B cell (primary cell): ENCODE measurements at regions of chr4 and their contacts with region 1.

Region 1: DNA sequence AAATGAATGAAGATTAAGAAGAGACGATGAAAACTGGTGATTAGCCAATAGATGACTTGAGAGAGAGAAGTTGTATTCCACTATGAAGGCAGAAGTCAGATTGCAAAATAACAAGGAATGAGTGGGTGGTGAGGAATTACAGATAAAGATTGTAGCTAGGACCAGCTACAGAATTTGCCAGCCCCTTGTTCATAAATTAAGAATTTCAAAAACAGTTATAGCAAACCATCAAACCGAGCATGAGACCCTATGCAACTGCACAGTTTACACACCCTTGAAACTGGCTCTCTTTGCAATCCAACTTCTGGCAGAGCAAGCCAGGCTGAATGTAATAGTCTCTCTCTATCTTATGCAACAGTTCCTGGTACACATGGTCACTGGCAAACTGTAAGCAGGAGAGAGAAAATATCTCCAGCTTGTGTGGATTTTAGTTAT is 35.2 kb downstream of the STAP1 start:
- DNase-seq: no peak
- ATAC-seq: no peak
- H3K4me3 ChIP-seq: no peak overlapping the region
- H3K4me3 Mint-ChIP-seq: no peak overlapping the region
- H3K27ac ChIP-seq: no peak overlapping the region
- H3K27ac Mint-ChIP-seq: peak overlapping the region; percentile 4
- H3K4me1 ChIP-seq: peaks cover 0 to 6% of the 10 kb centered on the region in 2 donors
- H3K4me1 Mint-ChIP-seq: peaks cover 26% of the 10 kb centered on the region
- H3K27me3 ChIP-seq: no peaks in the 10 kb centered on the region
- H3K27me3 Mint-ChIP-seq: no peaks in the 10 kb centered on the region
- CTCF ChIP-seq: no peak

Region 2: GRCh38 chr4:67632492-67632891 is 38.7 kb after region 1 on chr4:
- CTCF ChIA-PET with region 1: no interaction called
- POLR2A ChIA-PET with region 1: no interaction called
- intact Hi-C with region 1: loop called (anchors 5 kb)
- DNase-seq: peak; percentile 45
- ATAC-seq: peak; percentile 94
- H3K4me3 ChIP-seq: no peak overlapping the region
- H3K4me3 Mint-ChIP-seq: peak overlapping the region; percentile 50
- H3K27ac ChIP-seq: no peak overlapping the region
- H3K27ac Mint-ChIP-seq: peak overlapping the region; percentile 16
- H3K4me1 ChIP-seq: peaks cover 6 to 16% of the 10 kb centered on the region in 2 donors
- H3K4me1 Mint-ChIP-seq: peaks cover 15% of the 10 kb centered on the region
- H3K27me3 ChIP-seq: no peaks in the 10 kb centered on the region
- H3K27me3 Mint-ChIP-seq: no peaks in the 10 kb centered on the region
- CTCF ChIP-seq: no peak